ENCODE measurements at regions of chr9 and their contacts with region 1.

Region 1: GRCh38 chr9:94783102-94783664 is 56.7 kb downstream of the AOPEP start:
- DNase-seq: no peak
- ATAC-seq: no peak
- H3K4me3 Mint-ChIP-seq: no peak overlapping the region
- H3K27ac Mint-ChIP-seq: no peak overlapping the region
- H3K4me1 Mint-ChIP-seq: peaks cover 7% of the 10 kb centered on the region
- H3K27me3 Mint-ChIP-seq: no peaks in the 10 kb centered on the region
- CTCF ChIP-seq: no peak

Region 2: GRCh38 chr9:94917840-94918753 is 134.9 kb after region 1 on chr9:
- CTCF ChIA-PET with region 1: interaction called, 13 read pairs
- POLR2A ChIA-PET with region 1: no interaction called
- intact Hi-C with region 1: loop called (anchors 1 kb)
- DNase-seq: no peak
- ATAC-seq: peak; percentile 78
- H3K4me3 Mint-ChIP-seq: no peak overlapping the region
- H3K27ac Mint-ChIP-seq: no peak overlapping the region
- H3K4me1 Mint-ChIP-seq: peaks cover 3% of the 10 kb centered on the region
- H3K27me3 Mint-ChIP-seq: no peaks in the 10 kb centered on the region
- CTCF ChIP-seq: no peak

Region 3: GRCh38 chr9:94952565-94953373 is 169.6 kb after region 1 on chr9:
- CTCF ChIA-PET with region 1: no interaction called
- POLR2A ChIA-PET with region 1: no interaction called
- intact Hi-C with region 1: no loop called
- DNase-seq: no peak
- ATAC-seq: peak; percentile 49
- H3K4me3 Mint-ChIP-seq: no peak overlapping the region
- H3K27ac Mint-ChIP-seq: no peak overlapping the region
- H3K4me1 Mint-ChIP-seq: peaks cover 18% of the 10 kb centered on the region
- H3K27me3 Mint-ChIP-seq: no peaks in the 10 kb centered on the region
- CTCF ChIP-seq: no peak

Region 4: GRCh38 chr9:96777426-96777864 is 1994.3 kb after region 1 on chr9:
- CTCF ChIA-PET with region 1: no interaction called
- POLR2A ChIA-PET with region 1: interaction called, 11 read pairs
- intact Hi-C with region 1: no loop called
- DNase-seq: no peak
- ATAC-seq: no peak
- H3K4me3 Mint-ChIP-seq: peak overlapping the region; percentile 99
- H3K27ac Mint-ChIP-seq: peak overlapping the region; percentile 96
- H3K4me1 Mint-ChIP-seq: peaks cover 25% of the 10 kb centered on the region
- H3K27me3 Mint-ChIP-seq: no peaks in the 10 kb centered on the region
- CTCF ChIP-seq: no peak